Activated CD4-positive, alpha-beta T cell treated with anti-CD3 and anti-CD28 coated beads, Interleukin-2, amount 10 ng/mL, durations not matched to agents 24 days and 14 days (primary cell): ENCODE measurements at regions of chr20 and their contacts with region 1.

Region 1: GRCh38 chr20:44210422-44211176 is at the start of gene OSER1:
- DNase-seq: peak; percentile 100
- H3K4me3 Mint-ChIP-seq: peak within 1 kb of the TSS; percentile 94
- H3K27ac Mint-ChIP-seq: peak within 1 kb of the TSS; percentile 91
- H3K4me1 Mint-ChIP-seq: peaks cover 52% of the 10 kb centered on the region
- H3K27me3 Mint-ChIP-seq: peaks cover 2% of the 10 kb centered on the region
- total RNA-seq, gene OSER1: 22.7 and 23.6 TPM in 2 replicates

Region 2: GRCh38 chr20:43456809-43457639 is 753.6 kb before region 1 on chr20:
- intact Hi-C with region 1: loop called (anchors 5 kb)
- DNase-seq: peak; percentile 96
- H3K4me3 Mint-ChIP-seq: peak overlapping the region; percentile 93
- H3K27ac Mint-ChIP-seq: peak overlapping the region; percentile 98
- H3K4me1 Mint-ChIP-seq: peaks cover 22% of the 10 kb centered on the region
- H3K27me3 Mint-ChIP-seq: peaks cover 17% of the 10 kb centered on the region

Region 3: GRCh38 chr20:44310664-44311639 is 100.4 kb after region 1 on chr20 and contains the start of gene FITM2:
- intact Hi-C with region 1: loop called (anchors 1 kb)
- DNase-seq: peak; percentile 99
- H3K4me3 Mint-ChIP-seq: peak within 1 kb of the TSS; percentile 92
- H3K27ac Mint-ChIP-seq: peak within 1 kb of the TSS; percentile 92
- H3K4me1 Mint-ChIP-seq: peaks cover 16% of the 10 kb centered on the region
- H3K27me3 Mint-ChIP-seq: peaks cover 3% of the 10 kb centered on the region
- total RNA-seq, gene FITM2: 2.0 and 2.8 TPM in 2 replicates

Region 4: GRCh38 chr20:44521484-44522481 is 311.2 kb after region 1 on chr20 and contains the start of gene SERINC3:
- intact Hi-C with region 1: loop called (anchors 10 kb)
- DNase-seq: peak; percentile 99
- H3K4me3 Mint-ChIP-seq: peak within 1 kb of the TSS; percentile 86
- H3K27ac Mint-ChIP-seq: peak within 1 kb of the TSS; percentile 86
- H3K4me1 Mint-ChIP-seq: peaks cover 29% of the 10 kb centered on the region
- H3K27me3 Mint-ChIP-seq: no peaks in the 10 kb centered on the region
- total RNA-seq, gene SERINC3: 47.1 and 49.6 TPM in 2 replicates

Region 5: GRCh38 chr20:44885392-44886265 is 675.0 kb after region 1 on chr20 and contains the start of gene YWHAB:
- intact Hi-C with region 1: loop called (anchors 2 kb)
- DNase-seq: peak; percentile 99
- H3K4me3 Mint-ChIP-seq: peak within 1 kb of the TSS; percentile 97
- H3K27ac Mint-ChIP-seq: peak within 1 kb of the TSS; percentile 94
- H3K4me1 Mint-ChIP-seq: peaks cover 48% of the 10 kb centered on the region
- H3K27me3 Mint-ChIP-seq: no peaks in the 10 kb centered on the region
- total RNA-seq, gene YWHAB: 241 and 243 TPM in 2 replicates